Lower leg skin (tissue), 4 donors: ENCODE measurements at regions of chr19 and their contacts with region 1.

Region 1: GRCh38 chr19:45643024-45643926 is 4.1 kb upstream of the EML2 start:
- DNase-seq: peak; percentile 73 to 97
- H3K4me3 ChIP-seq: no peak overlapping the region
- CTCF ChIP-seq: peak in 1 of 3 donors; percentile 95
- POLR2A ChIP-seq: no peak

Region 2: DNA sequence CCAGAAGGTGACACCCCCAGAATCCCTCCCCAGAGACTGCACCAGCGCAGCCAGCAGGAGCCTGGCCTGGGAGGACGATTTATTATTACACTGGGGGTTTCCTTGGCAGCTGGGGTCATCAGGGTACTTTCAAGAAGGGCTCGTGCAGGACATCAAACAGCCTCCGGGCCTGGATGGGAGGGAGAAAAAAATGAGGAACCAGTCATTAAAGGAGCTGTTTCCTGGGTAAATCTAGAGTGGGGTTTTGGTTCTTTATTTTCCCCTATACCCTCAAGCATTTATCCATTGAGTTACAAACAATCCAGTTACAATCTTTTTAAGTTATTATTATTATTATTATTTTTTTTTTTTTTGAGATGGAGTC is 233.7 kb before region 1 on chr19:
- intact Hi-C with region 1: no loop called
- DNase-seq: no peak
- H3K4me3 ChIP-seq: no peak overlapping the region
- CTCF ChIP-seq: no peak
- POLR2A ChIP-seq: no peak

Region 3: GRCh38 chr19:45523642-45524256 is 119.5 kb before region 1 on chr19:
- intact Hi-C with region 1: loop called (anchors 10 kb)
- DNase-seq: peak; percentile 82 to 96
- H3K4me3 ChIP-seq: no peak overlapping the region
- CTCF ChIP-seq: no peak
- POLR2A ChIP-seq: no peak

Region 4: DNA sequence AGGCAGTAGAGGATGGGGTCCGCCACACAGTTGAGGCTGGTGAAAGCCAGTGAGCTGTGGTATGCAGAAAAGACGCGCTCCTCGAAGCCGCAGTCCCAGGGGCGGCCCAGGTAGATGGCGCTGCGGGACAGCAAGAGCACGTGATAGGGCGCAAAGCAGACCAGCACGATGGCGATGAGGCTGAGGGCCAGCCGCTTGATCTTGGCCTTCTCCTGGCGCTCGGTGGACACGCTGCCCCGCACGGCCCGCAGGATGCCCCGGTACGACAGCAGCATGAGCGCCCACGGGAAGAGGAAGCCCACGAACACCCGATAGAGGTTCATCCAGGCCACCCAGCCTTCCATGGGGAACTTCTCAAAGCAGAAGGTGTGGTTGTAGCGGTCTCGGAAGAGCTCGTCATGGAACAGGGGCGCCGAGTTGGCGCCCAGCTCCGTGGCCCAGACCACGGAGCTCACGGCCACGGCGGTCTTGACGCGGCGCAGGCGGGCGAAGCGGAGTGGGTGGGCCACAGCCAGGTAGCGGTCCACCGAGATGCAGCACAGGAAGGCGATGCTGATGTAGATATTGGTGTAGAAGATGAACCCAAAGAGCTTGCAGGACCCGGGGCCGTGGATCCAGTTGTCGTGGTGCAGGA is 52.2 kb before region 1 on chr19:
- intact Hi-C with region 1: loop called (anchors 5 kb)
- DNase-seq: no peak
- H3K4me3 ChIP-seq: no peak overlapping the region
- CTCF ChIP-seq: no peak
- POLR2A ChIP-seq: no peak

Region 5: GRCh38 chr19:45607071-45608029 is 35.9 kb before region 1 on chr19:
- intact Hi-C with region 1: loop called (anchors 5 kb)
- DNase-seq: peak; percentile 51 to 92
- H3K4me3 ChIP-seq: no peak overlapping the region
- CTCF ChIP-seq: peak in 1 of 3 donors; percentile 89
- POLR2A ChIP-seq: no peak